ENCODE measurements at regions of chr6 and their contacts with region 1.

Region 1: GRCh38 chr6:138086573-138087196 is 20.5 kb downstream of the PERP start:
- DNase-seq: peak in 1 of 2 experiments; percentile 50
- H3K4me3 ChIP-seq: no peak overlapping the region
- H3K27ac ChIP-seq: no peak overlapping the region
- H3K4me1 ChIP-seq: peaks cover 6 to 12% (median 9%) of the 10 kb centered on the region in 4 experiments
- H3K27me3 ChIP-seq: peaks cover 0 to 3% (median 1%) of the 10 kb centered on the region in 4 experiments; a peak in 1 of 7 replicates
- CTCF ChIP-seq: no peak
- EP300 ChIP-seq: no peak
- POLR2A ChIP-seq: no peak
- RAD21 ChIP-seq: no peak

Region 2: DNA sequence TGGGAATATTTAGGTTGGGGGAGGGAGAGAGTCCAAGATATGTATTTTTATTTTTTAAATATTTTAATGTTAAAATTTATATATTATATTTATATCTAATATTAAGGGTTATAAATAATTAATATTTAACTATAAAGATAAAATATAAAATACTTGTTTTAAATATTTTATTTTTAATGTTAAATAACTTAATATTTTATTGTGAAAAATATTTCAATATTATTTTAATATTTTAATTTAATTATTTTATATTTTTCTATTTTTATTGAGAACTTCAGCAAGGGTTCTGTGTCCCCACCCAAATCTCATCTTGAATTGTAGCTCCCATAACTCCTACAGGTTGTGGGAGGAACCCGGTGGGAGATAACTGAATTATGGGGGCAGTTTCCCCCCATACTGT is 13.4 kb before region 1 on chr6:
- CTCF ChIA-PET with region 1: interaction called, 11 read pairs
- POLR2A ChIA-PET with region 1: no interaction called
- DNase-seq: no peak
- H3K4me3 ChIP-seq: no peak overlapping the region
- H3K27ac ChIP-seq: no peak overlapping the region
- H3K4me1 ChIP-seq: no peaks in the 10 kb centered on the region
- H3K27me3 ChIP-seq: no peaks in the 10 kb centered on the region
- CTCF ChIP-seq: no peak
- EP300 ChIP-seq: no peak
- POLR2A ChIP-seq: no peak
- RAD21 ChIP-seq: no peak

Region 3: DNA sequence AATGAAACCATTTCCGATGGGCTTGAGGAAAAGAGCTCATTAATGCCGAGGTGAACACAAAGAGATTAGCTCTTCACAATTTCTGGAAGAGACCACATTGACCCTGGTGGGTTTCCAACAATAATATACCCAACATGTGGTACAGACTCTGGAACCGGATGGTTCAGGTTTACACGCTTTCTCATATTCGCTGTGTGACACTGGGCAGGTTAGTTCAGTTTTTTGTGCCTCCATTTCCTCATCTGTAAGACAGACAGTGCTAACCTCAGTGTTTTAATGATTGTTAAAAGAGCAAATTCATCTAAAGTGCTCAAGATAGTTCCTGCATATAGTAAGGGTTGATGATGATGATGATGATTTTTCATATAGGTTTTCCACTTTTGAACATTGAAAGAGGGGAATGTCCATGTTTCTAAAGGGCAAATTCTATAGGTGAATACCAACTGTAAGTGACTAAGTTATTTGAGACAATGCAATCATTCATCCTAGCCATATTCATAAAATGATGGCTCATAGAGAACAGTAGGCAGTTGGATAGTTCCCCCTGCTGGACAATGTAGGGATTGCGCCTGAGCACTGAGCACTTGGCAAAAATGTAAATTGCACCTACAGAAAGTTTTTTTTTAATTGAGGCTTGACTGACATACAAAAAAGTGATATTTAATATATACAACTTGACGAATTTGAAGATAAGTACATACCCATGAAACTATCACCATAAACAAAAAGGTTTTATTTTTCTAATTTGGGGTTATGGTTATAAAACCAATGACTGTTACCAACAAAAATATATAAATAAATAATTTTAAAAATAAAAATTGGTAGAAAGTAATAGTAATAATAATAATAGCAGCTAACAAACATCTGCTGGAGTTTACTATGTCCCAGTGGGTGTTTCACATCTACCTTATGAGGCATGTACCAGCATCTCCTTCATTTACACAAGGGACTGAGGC is 22.6 kb after region 1 on chr6:
- CTCF ChIA-PET with region 1: interaction called, 10 read pairs
- POLR2A ChIA-PET with region 1: interaction called, 6 read pairs
- DNase-seq: peak in 1 of 2 experiments; percentile 82
- H3K4me3 ChIP-seq: no peak overlapping the region
- H3K27ac ChIP-seq: no peak overlapping the region
- H3K4me1 ChIP-seq: peaks cover 0 to 6% (median 4%) of the 10 kb centered on the region in 4 experiments; a peak in 3 of 7 replicates
- H3K27me3 ChIP-seq: peaks cover 0 to 9% (median 2%) of the 10 kb centered on the region in 4 experiments; a peak in 2 of 7 replicates
- CTCF ChIP-seq: peak; percentile 22 to 81 (median 80)
- EP300 ChIP-seq: no peak
- POLR2A ChIP-seq: no peak
- RAD21 ChIP-seq: peak; percentile 87 to 91